ENCODE measurements at regions of chr5 and their contacts with region 1.

Region 1: DNA sequence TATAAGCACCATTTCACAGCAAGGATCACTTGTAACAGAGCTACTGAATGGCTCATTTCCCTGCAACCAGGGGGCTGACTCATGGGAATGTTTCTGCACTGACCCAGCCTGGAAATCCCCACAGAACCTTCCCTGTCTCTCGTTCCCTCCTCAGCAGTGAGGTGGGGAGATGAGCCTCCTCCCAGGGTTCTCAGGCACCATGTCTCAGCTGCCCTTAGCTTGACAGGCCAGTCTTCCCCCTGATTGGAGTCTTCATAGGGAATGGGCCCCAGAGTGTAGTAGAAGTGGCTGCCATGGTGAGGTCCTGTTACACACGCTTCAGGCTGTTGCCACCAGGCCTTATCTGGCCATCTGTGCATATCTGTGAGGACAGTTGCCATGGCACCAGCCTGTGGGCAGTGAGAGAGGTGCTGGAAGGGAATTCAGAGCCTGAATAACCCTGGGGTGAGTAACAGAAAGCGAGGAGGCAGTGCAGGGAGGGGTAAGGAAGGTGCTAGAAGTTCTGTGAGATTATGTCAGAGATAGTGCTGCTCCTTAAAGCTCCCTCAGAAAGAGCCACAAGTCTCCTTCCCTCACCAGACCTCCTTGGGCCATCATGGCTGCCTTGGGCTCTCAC is 324.4 kb downstream of the ENC1 start:
- DNase-seq: no peak
- H3K4me3 Mint-ChIP-seq: no peak overlapping the region
- H3K27ac Mint-ChIP-seq: no peak overlapping the region
- H3K4me1 Mint-ChIP-seq: no peaks in the 10 kb centered on the region
- H3K27me3 Mint-ChIP-seq: peaks cover 15% of the 10 kb centered on the region

Region 2: DNA sequence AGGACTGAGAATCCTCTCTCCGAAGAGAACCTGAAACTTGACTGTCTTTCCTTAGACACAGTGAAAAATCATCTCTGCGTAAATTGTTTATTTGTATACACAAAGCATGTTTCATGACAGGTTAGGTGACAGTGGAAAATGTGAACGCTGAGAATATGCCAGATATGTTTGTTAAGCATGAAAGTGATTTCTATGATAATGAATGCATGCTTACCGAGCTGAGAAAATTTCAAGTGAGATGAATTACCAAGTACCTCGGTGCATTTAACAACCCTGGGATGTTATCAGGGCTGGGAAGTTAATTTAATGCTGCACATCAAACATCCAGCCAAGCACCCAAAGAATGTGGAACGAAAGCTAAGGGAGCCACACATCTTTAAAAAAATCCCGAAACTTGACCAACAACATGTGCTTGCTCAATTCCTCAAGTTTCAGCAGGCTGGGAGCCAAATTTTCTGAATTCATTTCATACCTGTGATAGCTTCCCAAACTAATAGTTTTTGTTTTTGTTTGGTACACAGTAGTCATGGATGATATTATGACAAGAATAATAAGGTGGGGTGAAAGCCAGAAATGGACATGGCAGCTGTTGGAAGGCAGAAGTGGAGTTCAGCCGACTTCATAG is 353.3 kb before region 1 on chr5:
- intact Hi-C with region 1: no loop called
- DNase-seq: no peak
- H3K4me3 Mint-ChIP-seq: no peak overlapping the region
- H3K27ac Mint-ChIP-seq: no peak overlapping the region
- H3K4me1 Mint-ChIP-seq: no peaks in the 10 kb centered on the region
- H3K27me3 Mint-ChIP-seq: peaks cover 3% of the 10 kb centered on the region

Region 3: DNA sequence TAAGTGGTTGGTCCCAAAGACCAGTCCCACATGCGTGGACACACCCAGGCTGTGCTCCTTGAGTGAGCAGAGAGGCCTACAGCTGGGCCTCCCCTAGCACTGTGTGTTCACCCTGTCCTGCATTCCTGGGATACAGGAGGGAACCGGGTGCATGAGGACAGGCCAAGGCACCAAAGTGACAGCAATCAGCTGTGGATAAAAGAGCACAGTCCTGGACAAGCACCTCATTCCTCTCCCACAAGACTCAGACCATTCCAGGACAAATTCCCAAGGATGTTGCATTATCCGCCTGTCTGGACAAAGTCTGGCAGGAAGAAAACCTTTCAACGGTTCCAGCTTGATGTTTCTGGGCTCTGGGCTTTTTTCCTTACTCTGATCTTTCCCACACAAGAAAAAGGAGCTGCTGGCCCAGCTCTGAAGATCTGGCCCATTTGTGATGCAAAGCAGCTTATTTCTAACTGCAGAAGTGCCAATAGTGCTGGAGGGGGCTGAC is 51.1 kb after region 1 on chr5:
- intact Hi-C with region 1: no loop called
- DNase-seq: no peak
- H3K4me3 Mint-ChIP-seq: no peak overlapping the region
- H3K27ac Mint-ChIP-seq: no peak overlapping the region
- H3K4me1 Mint-ChIP-seq: no peaks in the 10 kb centered on the region
- H3K27me3 Mint-ChIP-seq: peaks cover 3% of the 10 kb centered on the region

Region 4: DNA sequence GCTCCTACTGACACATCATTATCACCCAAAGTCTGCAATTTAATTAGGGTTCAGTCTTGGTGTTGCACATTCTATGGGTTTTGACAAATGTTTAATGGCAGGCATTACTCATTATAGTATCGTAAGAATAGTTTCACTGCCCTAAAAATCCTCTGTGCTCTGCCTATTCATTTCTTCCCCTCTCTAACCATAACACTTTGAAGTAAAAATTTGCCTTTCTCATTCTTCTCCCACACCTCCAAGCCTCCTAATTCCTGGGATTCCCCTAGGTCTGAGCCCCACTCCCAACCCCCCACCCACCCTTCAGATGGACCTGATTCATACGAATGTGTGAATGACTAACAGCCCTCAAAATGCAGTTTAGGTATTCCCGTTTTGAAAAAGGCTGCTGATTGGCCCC is 305.9 kb after region 1 on chr5:
- intact Hi-C with region 1: loop called (anchors 1 kb)
- DNase-seq: no peak
- H3K4me3 Mint-ChIP-seq: no peak overlapping the region
- H3K27ac Mint-ChIP-seq: no peak overlapping the region
- H3K4me1 Mint-ChIP-seq: peaks cover 12% of the 10 kb centered on the region
- H3K27me3 Mint-ChIP-seq: peaks cover 29% of the 10 kb centered on the region

Measured in activated T-helper 1 cell treated with anti-CD3 and anti-CD28 coated beads, Interleukin-12 subunit alpha, Interleukin-12 subunit beta, Interleukin-2, Interleukin-4 antibody, amounts not matched to agents 30 ng/mL and 10 ng/mL and 1 ng/mL, durations not matched to agents 14 hours and 24 hours and 36 hours (primary cell).